Activated T-helper 1 cell treated with anti-CD3 and anti-CD28 coated beads, Interleukin-12 subunit alpha, Interleukin-12 subunit beta, Interleukin-2, Interleukin-4 antibody, amounts not matched to agents 30 ng/mL and 10 ng/mL and 1 ng/mL, durations not matched to agents 14 hours and 24 hours and 36 hours (primary cell): ENCODE measurements at regions of chr1 and their contacts with region 1.

Region 1: DNA sequence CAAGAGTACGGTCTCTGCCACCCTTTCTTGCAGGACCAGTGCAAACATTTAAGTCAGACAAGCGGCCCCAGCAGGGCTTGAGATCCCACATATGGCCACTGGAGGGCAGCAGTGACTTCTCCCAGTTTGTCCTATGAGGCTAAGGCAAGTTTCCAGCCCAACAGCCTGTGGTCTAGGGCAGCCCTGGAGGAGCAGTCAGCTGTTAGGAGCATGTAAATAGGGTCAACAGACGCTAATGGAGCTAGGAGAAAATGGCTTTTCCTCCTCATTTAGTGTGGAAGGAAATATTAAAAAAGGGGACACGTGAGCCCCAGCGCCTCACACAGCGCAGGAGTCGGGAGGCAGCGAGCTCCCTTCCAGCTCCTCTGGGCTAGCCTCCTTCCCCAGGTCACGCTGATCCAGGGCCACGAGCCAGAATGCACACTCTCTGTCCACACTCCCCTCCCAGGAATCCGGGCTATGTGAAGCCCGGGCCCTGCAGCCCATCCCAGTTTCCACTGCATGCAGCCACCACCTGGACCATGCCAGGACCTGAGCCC is 95.6 kb downstream of the LAMC2 start:
- DNase-seq: peak; percentile 50
- H3K4me3 Mint-ChIP-seq: no peak overlapping the region
- H3K27ac Mint-ChIP-seq: no peak overlapping the region
- H3K4me1 Mint-ChIP-seq: peaks cover 6% of the 10 kb centered on the region
- H3K27me3 Mint-ChIP-seq: peaks cover 5% of the 10 kb centered on the region

Region 2: GRCh38 chr1:183244466-183244865 is 37.2 kb before region 1 on chr1:
- intact Hi-C with region 1: no loop called
- DNase-seq: no peak
- H3K4me3 Mint-ChIP-seq: no peak overlapping the region
- H3K27ac Mint-ChIP-seq: no peak overlapping the region
- H3K4me1 Mint-ChIP-seq: no peaks in the 10 kb centered on the region
- H3K27me3 Mint-ChIP-seq: peaks cover 12% of the 10 kb centered on the region

Region 3: GRCh38 chr1:183685112-183685713 is 403.6 kb after region 1 on chr1:
- intact Hi-C with region 1: loop called (anchors 1 kb)
- DNase-seq: peak; percentile 11
- H3K4me3 Mint-ChIP-seq: no peak overlapping the region
- H3K27ac Mint-ChIP-seq: no peak overlapping the region
- H3K4me1 Mint-ChIP-seq: peaks cover 9% of the 10 kb centered on the region
- H3K27me3 Mint-ChIP-seq: peaks cover 19% of the 10 kb centered on the region